ENCODE measurements at regions of chr15 and their contacts with region 1.

Region 1: GRCh38 chr15:29674661-29675533 is 147.4 kb downstream of the TJP1 start:
- DNase-seq: no peak
- H3K4me3 ChIP-seq: peak overlapping the region; percentile 50 to 75
- H3K27ac ChIP-seq: peak overlapping the region in 1 of 2 donors; percentile 50
- H3K4me1 ChIP-seq: peaks cover 0 to 28% (median 11%) of the 10 kb centered on the region in 4 donors
- H3K27me3 ChIP-seq: peaks cover 0 to 4% of the 10 kb centered on the region in 2 donors
- CTCF ChIP-seq: no peak

Region 2: DNA sequence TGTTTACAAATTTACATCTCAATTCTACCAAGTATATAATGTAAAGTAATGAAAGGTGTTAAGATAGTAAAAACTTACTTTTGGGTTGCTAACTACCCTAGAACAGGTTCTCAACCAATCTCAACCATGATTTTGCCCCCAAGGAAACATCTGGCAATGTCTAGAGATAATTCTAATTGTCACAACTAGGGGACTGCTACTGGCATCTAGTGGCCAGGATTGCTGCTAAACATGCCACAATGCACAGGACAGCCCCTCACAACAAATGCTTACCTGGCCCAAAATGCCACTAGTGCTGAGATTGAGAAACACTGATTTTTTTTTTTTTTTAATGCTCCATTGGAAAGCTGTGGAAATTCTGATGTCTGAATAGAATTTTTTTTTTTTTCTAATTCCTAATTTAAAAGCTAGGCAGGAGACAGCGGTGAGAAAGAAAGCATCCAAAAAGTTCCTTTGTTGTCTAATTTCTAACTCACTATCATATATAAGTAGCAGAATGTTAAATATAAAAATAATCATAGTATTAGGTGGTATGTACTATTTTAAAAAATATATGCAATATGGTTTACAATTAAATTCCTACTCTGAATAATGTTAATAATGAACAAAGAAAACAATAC is 65.9 kb after region 1 on chr15:
- intact Hi-C with region 1: no loop called
- DNase-seq: no peak
- H3K4me3 ChIP-seq: no peak overlapping the region
- H3K27ac ChIP-seq: no peak overlapping the region
- H3K4me1 ChIP-seq: peaks cover 0 to 3% (median 0%) of the 10 kb centered on the region in 4 donors
- H3K27me3 ChIP-seq: no peaks in the 10 kb centered on the region
- CTCF ChIP-seq: no peak

Region 3: DNA sequence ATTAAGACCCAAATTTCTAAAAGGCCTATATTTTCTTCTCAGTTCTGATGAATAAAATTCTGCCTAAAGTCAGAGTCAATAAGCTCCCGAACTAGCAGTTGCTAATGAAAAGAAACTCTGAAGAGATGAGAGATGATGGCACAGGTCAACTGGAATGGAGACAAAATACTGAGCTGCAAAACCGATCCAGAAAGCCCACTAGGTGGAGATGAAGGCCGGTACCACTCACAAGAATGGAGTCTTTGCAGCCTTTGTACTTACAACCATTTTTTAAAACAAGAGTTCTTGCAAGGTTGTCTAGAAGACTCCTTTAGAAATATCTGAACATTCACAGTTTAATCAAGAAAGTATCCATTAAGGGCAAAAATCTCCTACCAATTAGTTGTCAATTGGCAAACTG is 267.2 kb after region 1 on chr15:
- intact Hi-C with region 1: loop called (anchors 10 kb)
- DNase-seq: no peak
- H3K4me3 ChIP-seq: no peak overlapping the region
- H3K27ac ChIP-seq: no peak overlapping the region
- H3K4me1 ChIP-seq: no peaks in the 10 kb centered on the region
- H3K27me3 ChIP-seq: no peaks in the 10 kb centered on the region
- CTCF ChIP-seq: peak in 1 of 2 experiments; percentile 12

Measured in tibial artery (tissue), 4 donors.